ENCODE measurements at regions of chr2 and their contacts with region 1.

Region 1: DNA sequence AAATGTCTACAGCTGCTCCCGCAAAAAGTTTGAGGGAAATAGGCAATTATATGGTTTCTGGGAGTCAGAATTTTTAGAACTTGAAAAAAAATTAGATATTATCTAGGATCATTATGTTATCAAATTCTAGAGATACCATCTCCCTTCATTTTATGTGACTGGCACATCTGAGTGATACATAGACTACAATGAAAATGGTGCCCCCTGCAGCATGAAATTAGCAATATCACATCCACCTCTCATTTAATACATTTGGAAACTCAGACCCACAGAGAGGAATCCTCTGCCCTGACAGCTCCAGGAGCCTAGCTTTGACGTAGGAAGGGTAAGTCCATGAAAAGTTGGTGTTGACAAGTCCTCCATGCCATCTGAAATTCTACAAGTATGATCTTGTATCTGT is 381.6 kb downstream of the SUCLG1 start:
- DNase-seq: no peak
- ATAC-seq: no peak
- H3K4me3 ChIP-seq: no peak overlapping the region
- H3K27ac ChIP-seq: no peak overlapping the region
- H3K4me1 ChIP-seq: no peaks in the 10 kb centered on the region
- H3K27me3 ChIP-seq: no peaks in the 10 kb centered on the region
- CTCF ChIP-seq: peak; percentile 35; the same call in 1 of the 2 replicates
- POLR2A ChIP-seq: no peak
- RAD21 ChIP-seq: no peak

Region 2: GRCh38 chr2:83879114-83879513 is 198.4 kb before region 1 on chr2:
- CTCF ChIA-PET with region 1: no interaction called
- POLR2A ChIA-PET with region 1: interaction called, 17 read pairs
- dilution Hi-C with region 1: no loop called
- in situ Hi-C with region 1: no loop called
- intact Hi-C with region 1: no loop called
- DNase-seq: no peak
- ATAC-seq: no peak
- H3K4me3 ChIP-seq: no peak overlapping the region
- H3K27ac ChIP-seq: no peak overlapping the region
- H3K4me1 ChIP-seq: no peaks in the 10 kb centered on the region
- H3K27me3 ChIP-seq: no peaks in the 10 kb centered on the region
- CTCF ChIP-seq: no peak
- POLR2A ChIP-seq: no peak
- RAD21 ChIP-seq: no peak

Region 3: GRCh38 chr2:84137034-84137433 is 59.5 kb after region 1 on chr2:
- CTCF ChIA-PET with region 1: no interaction called
- POLR2A ChIA-PET with region 1: no interaction called
- dilution Hi-C with region 1: no loop called
- in situ Hi-C with region 1: no loop called
- intact Hi-C with region 1: no loop called
- DNase-seq: no peak
- ATAC-seq: no peak
- H3K4me3 ChIP-seq: no peak overlapping the region
- H3K27ac ChIP-seq: no peak overlapping the region
- H3K4me1 ChIP-seq: no peaks in the 10 kb centered on the region
- H3K27me3 ChIP-seq: no peaks in the 10 kb centered on the region
- CTCF ChIP-seq: no peak
- POLR2A ChIP-seq: no peak
- RAD21 ChIP-seq: no peak

Measured in IMR-90 (cell line).